MCF 10A (cell line): ENCODE measurements at regions of chr12 and their contacts with region 1.

Region 1: DNA sequence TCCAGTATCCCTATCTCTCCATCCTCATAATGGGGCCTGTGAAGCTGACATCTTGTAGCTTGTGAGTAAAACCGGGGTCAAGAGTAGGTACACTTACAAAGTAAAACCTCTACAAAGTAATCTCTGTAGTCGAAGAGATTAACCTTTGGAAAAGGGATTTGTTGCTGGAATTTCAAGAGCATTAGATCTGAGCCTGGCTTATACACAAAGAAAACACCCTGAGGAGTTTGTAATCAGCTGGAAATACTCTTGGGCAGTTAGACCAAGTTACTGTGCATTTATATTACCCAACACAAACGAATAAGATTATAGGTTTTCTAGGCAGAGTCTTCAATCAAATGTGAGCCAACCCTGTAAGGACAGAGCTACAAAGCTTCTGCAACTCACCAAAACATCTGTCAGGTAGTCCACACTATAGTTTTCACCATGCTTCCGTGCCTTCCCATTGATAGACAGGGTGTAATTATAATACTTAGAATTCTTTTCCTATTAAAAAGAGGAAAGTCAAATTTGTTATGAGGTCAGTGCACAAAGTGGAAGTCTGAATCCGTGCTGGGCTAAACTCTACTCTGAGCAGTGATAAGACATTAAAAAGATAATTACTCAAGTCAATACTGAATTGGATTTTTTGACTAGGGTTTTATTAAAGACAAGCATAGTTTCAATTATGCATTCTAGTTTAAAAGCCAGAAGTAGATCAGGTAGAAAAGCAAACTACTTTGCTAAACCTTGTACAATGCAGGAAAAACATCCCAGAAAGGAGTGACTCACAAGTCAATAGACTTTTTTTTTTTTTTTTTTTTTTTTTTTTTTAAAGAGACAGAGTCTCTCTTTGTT is 14.6 kb downstream of the GNS start:
- DNase-seq: peak; percentile 45
- H3K4me3 Mint-ChIP-seq: peak overlapping the region; percentile 50
- H3K27ac Mint-ChIP-seq: peak overlapping the region; percentile 13
- H3K4me1 Mint-ChIP-seq: peaks cover 18% of the 10 kb centered on the region
- H3K27me3 Mint-ChIP-seq: no peaks in the 10 kb centered on the region
- CTCF ChIP-seq: no peak

Region 2: GRCh38 chr12:64723630-64724029 is 21.0 kb before region 1 on chr12:
- CTCF ChIA-PET with region 1: no interaction called
- POLR2A ChIA-PET with region 1: no interaction called
- intact Hi-C with region 1: no loop called
- DNase-seq: no peak
- H3K4me3 Mint-ChIP-seq: no peak overlapping the region
- H3K27ac Mint-ChIP-seq: no peak overlapping the region
- H3K4me1 Mint-ChIP-seq: no peaks in the 10 kb centered on the region
- H3K27me3 Mint-ChIP-seq: no peaks in the 10 kb centered on the region
- CTCF ChIP-seq: no peak

Region 3: DNA sequence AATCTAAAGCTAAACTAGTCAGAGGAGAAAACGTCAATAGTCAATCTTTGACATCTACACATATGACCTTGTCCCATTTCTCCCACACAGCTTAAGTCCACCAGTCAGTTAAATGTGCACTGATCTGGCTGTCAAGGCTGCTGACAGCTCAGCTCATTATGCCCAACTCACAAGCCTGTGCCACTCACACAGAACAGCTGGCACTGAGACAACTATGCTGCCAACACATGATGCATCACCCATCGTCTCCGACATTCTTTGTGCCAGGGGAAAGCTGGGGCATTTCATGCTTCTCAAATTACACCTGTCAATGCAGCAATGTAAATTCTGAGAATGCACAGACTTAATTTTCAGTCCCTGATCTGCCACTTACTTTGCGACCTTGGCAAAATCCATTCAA is 10.8 kb before region 1 on chr12:
- CTCF ChIA-PET with region 1: no interaction called
- POLR2A ChIA-PET with region 1: interaction called, 17 read pairs
- intact Hi-C with region 1: no loop called
- DNase-seq: peak; percentile 99
- H3K4me3 Mint-ChIP-seq: peak overlapping the region; percentile 7
- H3K27ac Mint-ChIP-seq: peak overlapping the region; percentile 2
- H3K4me1 Mint-ChIP-seq: peaks cover 23% of the 10 kb centered on the region
- H3K27me3 Mint-ChIP-seq: no peaks in the 10 kb centered on the region
- CTCF ChIP-seq: no peak

Region 4: GRCh38 chr12:64759035-64759901 is 14.6 kb after region 1 on chr12 and contains the start of gene GNS:
- CTCF ChIA-PET with region 1: interaction called, 10 read pairs
- POLR2A ChIA-PET with region 1: interaction called, 13 read pairs
- intact Hi-C with region 1: no loop called
- DNase-seq: peak; percentile 92
- H3K4me3 Mint-ChIP-seq: peak within 1 kb of the TSS; percentile 91
- H3K27ac Mint-ChIP-seq: peak within 1 kb of the TSS; percentile 91
- H3K4me1 Mint-ChIP-seq: peaks cover 10% of the 10 kb centered on the region
- H3K27me3 Mint-ChIP-seq: no peaks in the 10 kb centered on the region
- CTCF ChIP-seq: no peak
- total RNA-seq, gene GNS: 54.7 and 60.8 TPM in 2 replicates